ENCODE measurements at regions of chr1 and their contacts with region 1.

Region 1: GRCh38 chr1:154558575-154559465 is at the start of gene UBE2Q1:
- DNase-seq: peak; percentile 100
- ATAC-seq: peak; percentile 91
- H3K4me3 Mint-ChIP-seq: peak within 1 kb of the TSS; percentile 86
- H3K27ac Mint-ChIP-seq: peak within 1 kb of the TSS; percentile 88
- H3K4me1 Mint-ChIP-seq: peaks cover 27% of the 10 kb centered on the region
- H3K27me3 Mint-ChIP-seq: no peaks in the 10 kb centered on the region
- total RNA-seq, gene UBE2Q1: 103 to 110 TPM

Region 2: DNA sequence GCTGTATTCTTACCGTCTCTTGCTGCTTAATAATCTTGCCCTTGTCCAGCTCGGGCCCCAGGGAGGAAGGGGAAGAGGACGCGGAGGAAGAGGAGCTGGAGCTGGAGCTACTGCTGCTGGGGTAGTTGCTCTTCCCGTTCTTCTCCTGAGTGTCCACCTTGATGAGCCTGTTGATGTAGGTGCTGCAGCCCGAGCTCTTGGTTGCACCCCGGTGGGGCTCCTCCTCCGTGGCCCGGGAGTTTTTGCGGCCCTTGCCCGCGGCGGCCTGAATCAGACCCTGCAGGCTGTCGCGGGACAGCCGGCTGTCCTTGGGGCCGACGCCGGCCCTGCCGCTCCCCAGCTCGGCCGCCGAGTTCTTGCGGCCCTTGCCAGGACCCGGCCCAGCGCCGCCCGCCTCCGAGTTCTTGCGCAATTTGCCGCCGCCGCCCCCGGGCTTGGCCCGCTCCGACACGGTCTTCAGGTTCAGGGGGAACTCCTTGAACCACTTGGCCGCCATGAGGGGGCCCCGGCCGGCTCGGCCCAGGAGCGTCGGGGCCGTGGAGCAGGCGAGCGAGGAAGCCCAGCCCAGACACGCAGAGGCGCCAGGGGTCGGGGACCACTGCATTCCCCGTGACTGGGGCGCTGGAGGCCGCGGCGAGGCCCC is 57.3 kb before region 1 on chr1:
- CTCF ChIA-PET with region 1: no interaction called
- DNase-seq: no peak
- ATAC-seq: no peak
- H3K4me3 Mint-ChIP-seq: no peak overlapping the region
- H3K27ac Mint-ChIP-seq: no peak overlapping the region
- H3K4me1 Mint-ChIP-seq: peaks cover 8% of the 10 kb centered on the region
- H3K27me3 Mint-ChIP-seq: peaks cover 72% of the 10 kb centered on the region

Region 3: DNA sequence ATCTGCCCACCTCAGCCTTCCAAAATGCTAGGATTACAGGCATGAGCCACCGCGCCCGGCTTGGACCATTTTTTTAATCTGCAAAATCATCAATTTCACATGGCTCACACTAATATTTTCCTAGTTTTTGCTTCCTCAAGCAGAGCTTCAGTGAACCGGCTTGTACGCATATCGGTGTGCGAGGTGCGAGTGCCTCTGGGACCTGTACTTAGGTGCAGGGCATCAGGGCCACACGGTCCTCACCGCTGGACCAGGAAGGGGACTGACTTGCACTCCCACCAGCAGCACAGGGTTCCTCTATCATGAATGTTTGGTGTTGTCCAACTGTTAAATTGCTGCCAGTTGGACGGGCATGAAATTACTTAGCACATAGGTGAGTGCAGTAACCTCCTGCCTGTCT is 41.2 kb before region 1 on chr1:
- CTCF ChIA-PET with region 1: no interaction called
- DNase-seq: no peak
- ATAC-seq: no peak
- H3K4me3 Mint-ChIP-seq: no peak overlapping the region
- H3K27ac Mint-ChIP-seq: no peak overlapping the region
- H3K4me1 Mint-ChIP-seq: no peaks in the 10 kb centered on the region
- H3K27me3 Mint-ChIP-seq: peaks cover 44% of the 10 kb centered on the region

Region 4: DNA sequence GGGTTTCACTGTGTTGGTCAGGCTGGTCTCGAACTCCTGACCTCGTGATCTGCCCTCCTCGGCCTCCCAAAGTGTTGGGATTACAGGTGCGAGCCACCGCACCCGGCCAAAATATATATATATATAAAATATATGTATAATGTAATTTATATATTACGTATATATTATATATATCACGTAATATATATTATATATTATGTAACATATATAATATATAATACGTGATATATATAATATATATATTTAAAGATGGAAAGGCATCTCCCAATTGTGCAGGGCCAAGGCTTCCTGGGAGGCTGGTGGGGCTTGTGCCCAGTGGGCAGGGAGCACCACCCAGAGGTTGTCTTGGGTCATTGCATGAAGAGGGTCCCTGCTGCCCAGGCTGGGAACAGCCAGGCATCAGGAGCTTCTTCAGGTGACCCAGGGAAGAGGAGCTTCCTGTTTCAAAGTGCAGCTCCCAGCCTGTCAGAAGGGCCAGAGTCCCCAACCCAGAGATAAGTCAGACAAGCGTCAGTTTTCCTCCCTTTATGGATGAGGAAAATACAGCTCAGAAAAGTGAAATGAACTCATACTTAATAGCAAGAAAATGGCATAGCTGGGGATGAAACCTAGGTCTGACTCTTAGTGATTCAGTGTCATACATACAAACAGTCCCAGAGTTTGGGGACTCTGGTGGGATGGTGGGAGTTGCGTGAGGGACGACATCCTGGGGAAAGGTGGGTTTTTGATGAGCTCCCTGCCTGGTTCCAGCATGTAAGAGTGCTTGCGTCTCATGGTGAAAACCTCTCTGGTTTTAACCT is 12.4 kb before region 1 on chr1:
- CTCF ChIA-PET with region 1: interaction called, 19 read pairs
- DNase-seq: peak; percentile 69
- ATAC-seq: peak; percentile 86
- H3K4me3 Mint-ChIP-seq: no peak overlapping the region
- H3K27ac Mint-ChIP-seq: no peak overlapping the region
- H3K4me1 Mint-ChIP-seq: peaks cover 9% of the 10 kb centered on the region
- H3K27me3 Mint-ChIP-seq: peaks cover 4% of the 10 kb centered on the region

Region 5: DNA sequence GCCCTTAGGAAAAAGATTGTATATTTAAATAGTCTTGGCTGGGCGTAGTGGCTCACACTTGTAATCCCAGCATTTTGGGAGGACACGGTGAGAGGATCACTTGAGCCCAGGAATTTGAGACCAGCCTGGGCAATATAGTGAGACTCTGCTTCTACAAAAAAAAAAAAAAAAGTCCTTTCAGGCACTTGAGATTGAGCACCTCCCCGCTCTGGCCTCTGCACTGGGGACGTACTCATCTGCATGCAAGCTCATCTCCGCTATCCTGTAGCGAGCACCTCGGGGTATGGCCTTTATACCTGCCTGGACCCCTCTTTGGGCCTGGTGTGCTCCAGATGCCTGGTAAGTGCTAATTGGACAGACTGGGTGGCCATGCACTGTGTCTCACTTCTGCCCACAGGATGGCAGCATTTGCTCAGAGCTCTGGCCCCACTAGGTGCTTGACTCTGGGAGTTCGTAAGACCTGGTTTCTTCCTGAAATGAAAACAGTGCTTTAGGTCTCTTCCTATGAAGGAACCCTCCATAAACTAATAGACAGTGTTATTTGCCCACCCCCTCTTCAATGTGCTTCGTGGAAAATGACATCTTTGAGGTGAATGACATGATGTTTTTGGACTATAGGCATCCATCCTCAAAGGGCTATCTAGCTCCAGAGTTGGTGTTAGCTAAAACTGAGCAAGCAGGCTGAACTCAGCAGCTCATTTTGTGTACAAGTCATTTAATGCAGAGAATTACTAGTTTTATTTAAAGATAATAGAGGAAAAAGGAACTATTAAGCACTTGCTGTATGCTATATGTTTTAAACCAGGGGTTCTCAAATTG is 110.9 kb after region 1 on chr1:
- CTCF ChIA-PET with region 1: interaction called, 13 read pairs
- DNase-seq: peak; percentile 81
- ATAC-seq: peak; percentile 100
- H3K4me3 Mint-ChIP-seq: no peak overlapping the region
- H3K27ac Mint-ChIP-seq: no peak overlapping the region
- H3K4me1 Mint-ChIP-seq: peaks cover 5% of the 10 kb centered on the region
- H3K27me3 Mint-ChIP-seq: peaks cover 5% of the 10 kb centered on the region

Region 6: GRCh38 chr1:154747740-154748404 is 189.1 kb after region 1 on chr1:
- CTCF ChIA-PET with region 1: interaction called, 10 read pairs
- DNase-seq: peak; percentile 82
- ATAC-seq: peak; percentile 81
- H3K4me3 Mint-ChIP-seq: peak overlapping the region; percentile 46
- H3K27ac Mint-ChIP-seq: peak overlapping the region; percentile 76
- H3K4me1 Mint-ChIP-seq: peaks cover 54% of the 10 kb centered on the region
- H3K27me3 Mint-ChIP-seq: peaks cover 81% of the 10 kb centered on the region

Region 7: GRCh38 chr1:154760469-154760933 is 201.7 kb after region 1 on chr1:
- CTCF ChIA-PET with region 1: interaction called, 20 read pairs
- DNase-seq: peak; percentile 84
- ATAC-seq: peak; percentile 95
- H3K4me3 Mint-ChIP-seq: peak overlapping the region; percentile 34
- H3K27ac Mint-ChIP-seq: no peak overlapping the region
- H3K4me1 Mint-ChIP-seq: peaks cover 39% of the 10 kb centered on the region
- H3K27me3 Mint-ChIP-seq: peaks cover 44% of the 10 kb centered on the region

Region 8: GRCh38 chr1:154878371-154879022 is 319.7 kb after region 1 on chr1:
- CTCF ChIA-PET with region 1: interaction called, 21 read pairs
- DNase-seq: peak; percentile 79
- ATAC-seq: peak; percentile 97
- H3K4me3 Mint-ChIP-seq: no peak overlapping the region
- H3K27ac Mint-ChIP-seq: no peak overlapping the region
- H3K4me1 Mint-ChIP-seq: peaks cover 4% of the 10 kb centered on the region
- H3K27me3 Mint-ChIP-seq: peaks cover 35% of the 10 kb centered on the region

Region 9: GRCh38 chr1:154936555-154937084 is 377.8 kb after region 1 on chr1 and contains the start of gene PMVK:
- CTCF ChIA-PET with region 1: interaction called, 14 read pairs
- DNase-seq: peak; percentile 98
- ATAC-seq: peak; percentile 85
- H3K4me3 Mint-ChIP-seq: peak within 1 kb of the TSS; percentile 95
- H3K27ac Mint-ChIP-seq: peak within 1 kb of the TSS; percentile 96
- H3K4me1 Mint-ChIP-seq: peaks cover 61% of the 10 kb centered on the region
- H3K27me3 Mint-ChIP-seq: no peaks in the 10 kb centered on the region
- total RNA-seq, gene PMVK: 43.6 to 46.8 TPM

Region 10: GRCh38 chr1:155038602-155039307 is 479.9 kb after region 1 on chr1:
- CTCF ChIA-PET with region 1: no interaction called
- DNase-seq: no peak
- ATAC-seq: no peak
- H3K4me3 Mint-ChIP-seq: no peak overlapping the region
- H3K27ac Mint-ChIP-seq: no peak overlapping the region
- H3K4me1 Mint-ChIP-seq: peaks cover 4% of the 10 kb centered on the region
- H3K27me3 Mint-ChIP-seq: peaks cover 33% of the 10 kb centered on the region